Psoas muscle (tissue), 8 donors: ENCODE measurements at regions of chr4 and their contacts with region 1.

Region 1: DNA sequence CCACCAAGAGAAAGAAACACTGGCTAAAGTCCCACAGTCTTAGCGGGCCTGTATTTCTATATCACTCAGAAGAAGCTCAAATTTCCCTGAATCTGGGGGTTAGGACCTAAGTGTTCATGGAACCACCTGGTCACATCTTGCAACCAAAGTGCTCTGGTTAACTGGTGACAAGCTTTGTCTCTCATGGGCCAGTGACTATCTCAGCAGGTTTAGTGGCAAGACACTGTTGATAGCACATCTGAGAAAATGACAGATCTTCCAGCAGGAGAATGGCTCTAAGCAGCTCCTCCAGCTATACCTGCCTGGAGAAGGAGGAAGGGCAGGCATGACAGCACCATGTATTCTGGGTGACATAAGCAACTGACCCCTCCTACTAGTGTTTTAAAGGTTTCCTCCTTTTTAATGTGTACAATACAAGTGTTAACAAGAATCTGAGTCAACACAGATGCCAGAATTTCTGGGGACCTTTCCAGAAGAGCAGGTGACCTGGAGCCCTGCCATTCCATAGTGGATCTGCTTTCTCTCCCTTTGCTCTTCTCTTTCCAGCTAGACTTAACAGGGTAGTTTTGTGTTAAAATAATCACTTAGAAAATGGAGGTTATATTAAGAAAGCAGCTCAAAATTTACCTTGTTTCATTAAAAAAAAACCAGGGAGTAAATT is 17.3 kb upstream of the QRFPR start:
- DNase-seq: no peak
- ATAC-seq: no peak
- H3K4me3 ChIP-seq: no peak overlapping the region
- H3K27ac ChIP-seq: no peak overlapping the region
- H3K4me1 ChIP-seq: no peaks in the 10 kb centered on the region
- H3K27me3 ChIP-seq: no peaks in the 10 kb centered on the region
- CTCF ChIP-seq: no peak

Region 2: DNA sequence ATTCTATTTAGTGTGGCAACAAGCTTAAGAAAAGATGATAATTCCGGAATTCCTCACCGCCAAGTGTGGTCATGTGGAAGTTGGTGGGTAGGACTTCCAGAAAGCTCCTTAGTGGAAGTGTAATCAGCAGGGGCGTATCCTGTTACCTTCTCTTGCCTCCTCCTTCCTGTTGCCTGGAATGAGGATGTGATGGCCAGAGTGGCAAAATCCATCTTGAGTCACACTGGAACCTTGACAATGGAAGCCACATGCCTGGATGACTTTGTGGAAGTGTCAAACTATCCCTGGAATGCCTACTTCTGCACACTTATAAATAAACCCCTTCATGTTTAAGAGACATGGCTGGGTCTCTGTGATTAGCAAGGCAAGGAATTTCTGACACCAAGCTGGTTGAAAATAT is 666.5 kb before region 1 on chr4:
- intact Hi-C with region 1: loop called in 1 of 2 experiments (anchors 10 kb)
- DNase-seq: no peak
- ATAC-seq: peak in 1 of 4 donors; percentile 30
- H3K4me3 ChIP-seq: no peak overlapping the region
- H3K27ac ChIP-seq: no peak overlapping the region
- H3K4me1 ChIP-seq: no peaks in the 10 kb centered on the region
- H3K27me3 ChIP-seq: no peaks in the 10 kb centered on the region
- CTCF ChIP-seq: no peak

Region 3: GRCh38 chr4:121339307-121339706 is 58.8 kb before region 1 on chr4:
- intact Hi-C with region 1: no loop called
- DNase-seq: no peak
- ATAC-seq: no peak
- H3K4me3 ChIP-seq: no peak overlapping the region
- H3K27ac ChIP-seq: no peak overlapping the region
- H3K4me1 ChIP-seq: no peaks in the 10 kb centered on the region
- H3K27me3 ChIP-seq: peaks cover 0 to 2% (median 0%) of the 10 kb centered on the region in 3 donors
- CTCF ChIP-seq: no peak